GM13976 (cell line): ENCODE measurements at regions of chr12 and their contacts with region 1.

Region 1: GRCh38 chr12:9741726-9742125 is 8.8 kb upstream of the CLECL1 start:
- DNase-seq: peak; percentile 48
- CTCF ChIP-seq: no peak

Region 2: DNA sequence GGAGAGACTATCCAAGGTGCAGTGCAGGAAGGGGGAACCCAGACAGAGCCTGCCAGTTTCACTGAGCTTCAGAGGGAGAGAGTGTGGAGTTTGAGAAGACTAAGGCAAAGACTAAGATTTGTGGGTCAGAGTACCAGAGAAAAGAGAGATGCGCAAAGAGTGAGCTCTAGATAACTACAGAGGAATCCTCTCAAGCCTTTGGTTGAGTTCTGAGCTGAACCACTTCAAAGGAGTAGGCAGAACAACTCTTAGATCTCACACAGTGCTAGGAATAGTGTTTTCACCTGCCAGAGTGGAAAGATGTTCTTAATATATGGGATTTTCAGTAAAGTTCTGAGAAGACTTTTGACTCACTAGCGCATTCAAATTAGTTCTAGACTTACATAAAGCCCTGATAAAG is 781.5 kb before region 1 on chr12:
- in situ Hi-C with region 1: no loop called
- DNase-seq: no peak
- CTCF ChIP-seq: no peak

Region 3: GRCh38 chr12:9799961-9800360 is 58.2 kb after region 1 on chr12:
- in situ Hi-C with region 1: loop called (anchors 5 kb)
- DNase-seq: no peak
- CTCF ChIP-seq: no peak